ENCODE measurements at regions of chr1 and their contacts with region 1.

Region 1: GRCh38 chr1:221435504-221435904 is 306.4 kb downstream of the DUSP10 start:
- DNase-seq: no peak
- ATAC-seq: peak; percentile 55
- H3K4me3 ChIP-seq: no peak overlapping the region
- H3K27ac ChIP-seq: no peak overlapping the region
- H3K4me1 ChIP-seq: 0 out of 2 replicates have a peak, but pooled peaks cover 4% of the 10 kb centered on the region
- H3K27me3 ChIP-seq: no peaks in the 10 kb centered on the region
- CTCF ChIP-seq: peak; percentile 78 to 90 (median 80)
- EP300 ChIP-seq: no peak
- POLR2A ChIP-seq: no peak
- RAD21 ChIP-seq: peak; percentile 88

Region 2: DNA sequence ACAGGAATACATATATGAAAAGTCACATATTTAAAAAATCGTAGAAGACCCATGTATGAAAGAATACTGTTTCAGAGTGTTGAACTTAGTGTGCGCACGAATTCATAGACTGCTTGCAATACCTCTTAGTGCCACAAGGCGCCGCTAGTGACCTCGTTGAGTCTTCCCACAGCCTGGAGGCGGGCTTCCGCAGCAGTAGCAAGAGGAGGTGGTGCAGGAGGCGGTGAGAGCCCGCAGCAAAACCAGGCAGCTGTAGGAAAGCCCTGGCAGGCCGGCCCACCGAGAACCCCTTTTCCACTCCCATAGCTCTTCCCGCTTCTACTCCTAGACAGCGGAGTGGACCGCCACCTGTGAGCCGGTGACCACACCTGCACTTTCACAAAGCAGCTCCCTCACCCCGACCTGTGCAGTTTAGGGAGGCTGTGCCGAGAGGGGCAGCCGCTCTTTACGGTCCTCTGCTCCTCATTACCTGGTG is 625.3 kb before region 1 on chr1:
- CTCF ChIA-PET with region 1: interaction called, 45 read pairs
- POLR2A ChIA-PET with region 1: no interaction called
- RAD21 ChIA-PET with region 1: interaction called, 17 read pairs
- SMC1A ChIA-PET with region 1: interaction called, 11 read pairs
- in situ Hi-C with region 1: no loop called
- intact Hi-C with region 1: loop called (anchors 1 kb)
- DNase-seq: peak; percentile 8
- ATAC-seq: peak; percentile 95
- H3K4me3 ChIP-seq: no peak overlapping the region
- H3K27ac ChIP-seq: no peak overlapping the region
- H3K4me1 ChIP-seq: no peaks in the 10 kb centered on the region
- H3K27me3 ChIP-seq: no peaks in the 10 kb centered on the region; a peak in 1 of 4 replicates
- CTCF ChIP-seq: peak; percentile 93 to 96 (median 94); a peak in 5 of 6 replicates
- EP300 ChIP-seq: no peak
- POLR2A ChIP-seq: no peak
- RAD21 ChIP-seq: peak; percentile 75

Region 3: DNA sequence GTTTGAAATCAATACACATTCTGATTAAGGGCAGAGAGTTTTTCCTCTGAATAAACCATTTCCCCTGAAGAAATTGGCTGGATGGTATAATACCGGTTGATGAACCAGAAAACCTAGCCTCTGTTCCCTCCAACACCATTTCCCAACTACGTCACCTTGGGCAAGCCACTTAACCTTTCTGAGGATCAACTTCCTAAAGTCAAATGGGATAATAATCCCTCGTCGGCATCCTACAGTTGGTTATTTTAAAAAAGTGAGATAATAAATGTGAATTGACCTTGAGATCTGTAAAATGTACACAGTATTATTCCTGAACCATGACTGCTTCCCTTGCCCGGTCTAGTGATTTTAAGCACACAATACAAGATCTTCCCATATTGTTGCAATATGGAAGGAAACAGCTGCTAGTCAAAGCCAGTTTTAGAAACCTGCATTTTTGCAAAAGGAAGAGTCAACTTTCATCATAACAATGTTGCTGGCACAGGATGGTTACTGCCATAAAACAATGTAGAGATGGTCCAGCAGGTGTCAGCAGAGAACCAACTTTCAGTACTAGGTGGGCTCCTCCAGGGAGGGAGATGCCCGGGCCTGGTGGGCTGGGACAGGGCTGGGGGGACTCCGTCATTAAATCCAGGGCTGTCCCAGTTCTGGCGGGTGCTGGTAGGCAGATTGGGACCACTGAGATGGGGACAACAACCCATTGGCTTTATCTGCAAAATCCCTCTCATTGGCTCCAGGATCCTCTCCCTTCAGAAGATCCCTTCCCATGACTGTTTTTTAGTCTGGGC is 561.4 kb before region 1 on chr1:
- CTCF ChIA-PET with region 1: interaction called, 142 read pairs
- POLR2A ChIA-PET with region 1: no interaction called
- RAD21 ChIA-PET with region 1: interaction called, 28 read pairs
- SMC1A ChIA-PET with region 1: interaction called, 36 read pairs
- in situ Hi-C with region 1: loop called (anchors 5 kb)
- intact Hi-C with region 1: loop called (anchors 1 kb)
- DNase-seq: no peak
- ATAC-seq: peak; percentile 47
- H3K4me3 ChIP-seq: no peak overlapping the region
- H3K27ac ChIP-seq: no peak overlapping the region
- H3K4me1 ChIP-seq: peaks cover 10% of the 10 kb centered on the region
- H3K27me3 ChIP-seq: 0 out of 4 replicates have a peak, but pooled peaks cover 0 to 4% of the 10 kb centered on the region in 2 experiments
- CTCF ChIP-seq: peak; percentile 60 to 79 (median 65); a peak in 5 of 6 replicates
- EP300 ChIP-seq: no peak
- POLR2A ChIP-seq: no peak
- RAD21 ChIP-seq: peak; percentile 82

Region 4: DNA sequence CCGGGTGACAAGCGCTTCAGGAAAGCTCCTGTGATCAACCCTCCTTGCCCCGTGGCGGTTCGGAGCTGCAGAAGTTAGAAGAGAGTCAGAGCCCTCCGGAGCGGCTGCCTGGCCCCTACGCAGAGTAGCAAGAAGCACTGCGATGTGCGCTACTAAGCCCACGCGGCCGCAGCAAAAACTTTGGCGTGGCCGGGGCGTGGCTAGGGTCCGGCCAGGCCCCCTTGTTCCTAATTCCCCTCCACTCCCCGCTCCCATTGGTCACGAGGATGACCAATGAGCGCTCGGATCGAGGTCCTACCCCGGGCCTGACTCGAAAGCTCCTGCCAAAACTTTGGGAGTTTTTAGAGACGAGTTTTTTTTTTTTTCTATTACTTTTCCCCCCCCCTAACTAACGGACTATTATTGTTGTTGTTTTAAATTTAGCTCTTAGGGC is 556.4 kb before region 1 on chr1 and contains the start of gene HLX:
- CTCF ChIA-PET with region 1: interaction called, 142 read pairs
- POLR2A ChIA-PET with region 1: no interaction called
- RAD21 ChIA-PET with region 1: interaction called, 28 read pairs
- SMC1A ChIA-PET with region 1: interaction called, 36 read pairs
- in situ Hi-C with region 1: loop called (anchors 5 kb)
- intact Hi-C with region 1: loop called (anchors 1 kb)
- DNase-seq: no peak
- ATAC-seq: peak; percentile 82
- H3K4me3 ChIP-seq: peak within 1 kb of the TSS; percentile 68
- H3K27ac ChIP-seq: no peak within 1 kb of the TSS
- H3K4me1 ChIP-seq: peaks cover 15% of the 10 kb centered on the region
- H3K27me3 ChIP-seq: peaks cover 0 to 17% of the 10 kb centered on the region in 2 experiments; a peak in 3 of 4 replicates
- CTCF ChIP-seq: no peak
- EP300 ChIP-seq: no peak
- POLR2A ChIP-seq: no peak
- RAD21 ChIP-seq: no peak
- polyA plus RNA-seq, gene HLX: 0.11 to 0.22 TPM

Region 5: DNA sequence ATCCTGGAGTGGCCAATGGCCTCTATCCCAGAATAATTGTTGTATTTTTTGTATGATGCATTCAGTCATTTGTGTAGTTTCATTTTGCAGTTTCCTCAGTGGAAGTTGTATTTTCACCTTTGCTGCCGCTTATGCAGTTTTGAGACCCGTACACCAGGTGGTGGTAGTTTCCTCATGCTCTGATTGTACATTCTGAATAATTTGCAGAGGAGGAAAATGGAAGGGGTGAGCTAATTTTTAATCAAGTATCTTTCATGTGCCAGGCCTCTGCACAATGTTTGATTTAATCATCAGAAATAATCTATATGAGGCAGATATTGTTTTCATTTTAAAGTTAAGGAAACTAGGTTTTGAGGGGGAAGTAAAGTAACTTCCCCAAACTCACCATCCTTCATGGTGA is 526.7 kb before region 1 on chr1:
- CTCF ChIA-PET with region 1: interaction called, 5 read pairs
- POLR2A ChIA-PET with region 1: no interaction called
- RAD21 ChIA-PET with region 1: interaction called, 10 read pairs
- SMC1A ChIA-PET with region 1: interaction called, 6 read pairs
- in situ Hi-C with region 1: no loop called
- intact Hi-C with region 1: no loop called
- DNase-seq: no peak
- ATAC-seq: peak; percentile 68
- H3K4me3 ChIP-seq: no peak overlapping the region
- H3K27ac ChIP-seq: no peak overlapping the region
- H3K4me1 ChIP-seq: no peaks in the 10 kb centered on the region
- H3K27me3 ChIP-seq: no peaks in the 10 kb centered on the region; a peak in 2 of 4 replicates
- CTCF ChIP-seq: peak; percentile 50 to 57 (median 53); a peak in 5 of 6 replicates
- EP300 ChIP-seq: no peak
- POLR2A ChIP-seq: no peak
- RAD21 ChIP-seq: peak; percentile 78

Region 6: GRCh38 chr1:221263831-221264767 is 171.4 kb before region 1 on chr1:
- CTCF ChIA-PET with region 1: interaction called, 27 read pairs
- POLR2A ChIA-PET with region 1: no interaction called
- RAD21 ChIA-PET with region 1: interaction called, 20 read pairs
- SMC1A ChIA-PET with region 1: interaction called, 13 read pairs
- in situ Hi-C with region 1: no loop called
- intact Hi-C with region 1: loop called (anchors 10 kb)
- DNase-seq: peak; percentile 5
- ATAC-seq: peak; percentile 97
- H3K4me3 ChIP-seq: no peak overlapping the region
- H3K27ac ChIP-seq: no peak overlapping the region
- H3K4me1 ChIP-seq: no peaks in the 10 kb centered on the region
- H3K27me3 ChIP-seq: no peaks in the 10 kb centered on the region
- CTCF ChIP-seq: peak; percentile 47 to 57 (median 51); a peak in 5 of 6 replicates
- EP300 ChIP-seq: no peak
- POLR2A ChIP-seq: no peak
- RAD21 ChIP-seq: peak; percentile 51

Region 7: GRCh38 chr1:221419513-221420088 is 15.9 kb before region 1 on chr1:
- CTCF ChIA-PET with region 1: interaction called, 5 read pairs
- POLR2A ChIA-PET with region 1: no interaction called
- RAD21 ChIA-PET with region 1: interaction called, 5 read pairs
- SMC1A ChIA-PET with region 1: interaction called, 10 read pairs
- in situ Hi-C with region 1: no loop called
- intact Hi-C with region 1: no loop called
- DNase-seq: no peak
- ATAC-seq: no peak
- H3K4me3 ChIP-seq: no peak overlapping the region
- H3K27ac ChIP-seq: no peak overlapping the region
- H3K4me1 ChIP-seq: no peaks in the 10 kb centered on the region
- H3K27me3 ChIP-seq: no peaks in the 10 kb centered on the region
- CTCF ChIP-seq: no peak
- EP300 ChIP-seq: no peak
- POLR2A ChIP-seq: no peak
- RAD21 ChIP-seq: no peak